Panc1 (cell line): ENCODE measurements at regions of chr2 and their contacts with region 1.

Region 1: GRCh38 chr2:9287400-9288043 is 80.9 kb downstream of the ASAP2 start:
- DNase-seq: peak; percentile 98
- ATAC-seq: peak; percentile 91
- H3K4me3 ChIP-seq: peak overlapping the region; percentile 1 to 19; a peak in 2 of 4 replicates
- H3K27ac ChIP-seq: peak overlapping the region; percentile 98
- H3K4me1 ChIP-seq: peaks cover 92% of the 10 kb centered on the region
- H3K27me3 ChIP-seq: no peaks in the 10 kb centered on the region
- CTCF ChIP-seq: no peak; the same call in 1 of the 2 replicates

Region 2: GRCh38 chr2:9178904-9179571 is 108.5 kb before region 1 on chr2:
- CTCF ChIA-PET with region 1: no interaction called
- POLR2A ChIA-PET with region 1: interaction called, 24 read pairs
- in situ Hi-C with region 1: no loop called
- intact Hi-C with region 1: no loop called
- DNase-seq: no peak
- ATAC-seq: peak; percentile 62
- H3K4me3 ChIP-seq: no peak overlapping the region; a peak in 1 of 4 replicates
- H3K27ac ChIP-seq: peak overlapping the region; percentile 83
- H3K4me1 ChIP-seq: peaks cover 25% of the 10 kb centered on the region
- H3K27me3 ChIP-seq: no peaks in the 10 kb centered on the region
- CTCF ChIP-seq: no peak

Region 3: GRCh38 chr2:9234680-9235387 is 52.7 kb before region 1 on chr2:
- CTCF ChIA-PET with region 1: no interaction called
- POLR2A ChIA-PET with region 1: interaction called, 4 read pairs
- in situ Hi-C with region 1: loop called (anchors 5 kb)
- intact Hi-C with region 1: no loop called
- DNase-seq: no peak
- ATAC-seq: peak; percentile 64
- H3K4me3 ChIP-seq: peak overlapping the region; percentile 24 to 45
- H3K27ac ChIP-seq: peak overlapping the region; percentile 100
- H3K4me1 ChIP-seq: peaks cover 99% of the 10 kb centered on the region
- H3K27me3 ChIP-seq: no peaks in the 10 kb centered on the region
- CTCF ChIP-seq: no peak